CD8-positive, alpha-beta T cell (primary cell): ENCODE measurements at regions of chr4 and their contacts with region 1.

Region 1: DNA sequence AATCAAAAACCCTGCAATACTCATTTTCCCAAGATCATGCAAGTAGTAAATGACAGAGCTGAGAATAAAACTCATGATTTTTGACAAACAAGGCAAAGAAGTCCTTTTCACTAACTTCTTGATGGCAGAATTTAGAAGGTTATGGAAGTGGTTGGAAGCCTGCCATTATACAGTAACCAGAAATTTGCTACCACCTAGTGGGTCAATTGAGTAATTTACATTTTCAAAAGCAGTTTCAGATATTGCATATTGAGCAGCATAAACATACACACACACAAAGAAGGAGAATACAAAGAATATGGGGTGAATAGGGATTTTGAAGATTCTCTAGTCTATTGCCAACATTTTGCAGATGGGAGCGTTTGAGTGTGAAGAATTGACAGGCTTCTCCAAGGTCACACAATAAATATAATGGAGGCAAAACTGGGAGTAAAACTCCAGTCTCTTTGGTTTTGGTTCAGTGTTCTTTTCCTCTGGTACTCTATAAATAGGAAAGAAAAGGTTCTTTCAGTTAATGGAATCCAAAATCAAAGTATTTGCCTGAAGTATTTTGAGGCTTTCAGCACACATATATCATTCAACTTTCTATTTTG is 70.2 kb downstream of the GC start:
- DNase-seq: peak in 2 of 9 experiments; percentile 46 to 54
- ATAC-seq: no peak
- H3K4me3 ChIP-seq: no peak overlapping the region
- H3K4me3 Mint-ChIP-seq: no peak overlapping the region
- H3K27ac ChIP-seq: no peak overlapping the region
- H3K27ac Mint-ChIP-seq: no peak overlapping the region
- H3K4me1 ChIP-seq: no peaks in the 10 kb centered on the region
- H3K4me1 Mint-ChIP-seq: no peaks in the 10 kb centered on the region
- H3K27me3 ChIP-seq: no peaks in the 10 kb centered on the region
- H3K27me3 Mint-ChIP-seq: no peaks in the 10 kb centered on the region
- CTCF ChIP-seq: peak; percentile 52

Region 2: GRCh38 chr4:70601422-70602039 is 1112.2 kb before region 1 on chr4:
- CTCF ChIA-PET with region 1: interaction called, 4 read pairs
- POLR2A ChIA-PET with region 1: no interaction called
- intact Hi-C with region 1: loop called in 1 of 2 experiments (anchors 2 kb)
- DNase-seq: peak; percentile 34 to 79 (median 61)
- ATAC-seq: peak; percentile 77
- H3K4me3 ChIP-seq: no peak overlapping the region
- H3K4me3 Mint-ChIP-seq: no peak overlapping the region
- H3K27ac ChIP-seq: no peak overlapping the region
- H3K27ac Mint-ChIP-seq: no peak overlapping the region
- H3K4me1 ChIP-seq: peaks cover 6% of the 10 kb centered on the region
- H3K4me1 Mint-ChIP-seq: no peaks in the 10 kb centered on the region
- H3K27me3 ChIP-seq: no peaks in the 10 kb centered on the region
- H3K27me3 Mint-ChIP-seq: peaks cover 4% of the 10 kb centered on the region
- CTCF ChIP-seq: peak; percentile 90

Region 3: DNA sequence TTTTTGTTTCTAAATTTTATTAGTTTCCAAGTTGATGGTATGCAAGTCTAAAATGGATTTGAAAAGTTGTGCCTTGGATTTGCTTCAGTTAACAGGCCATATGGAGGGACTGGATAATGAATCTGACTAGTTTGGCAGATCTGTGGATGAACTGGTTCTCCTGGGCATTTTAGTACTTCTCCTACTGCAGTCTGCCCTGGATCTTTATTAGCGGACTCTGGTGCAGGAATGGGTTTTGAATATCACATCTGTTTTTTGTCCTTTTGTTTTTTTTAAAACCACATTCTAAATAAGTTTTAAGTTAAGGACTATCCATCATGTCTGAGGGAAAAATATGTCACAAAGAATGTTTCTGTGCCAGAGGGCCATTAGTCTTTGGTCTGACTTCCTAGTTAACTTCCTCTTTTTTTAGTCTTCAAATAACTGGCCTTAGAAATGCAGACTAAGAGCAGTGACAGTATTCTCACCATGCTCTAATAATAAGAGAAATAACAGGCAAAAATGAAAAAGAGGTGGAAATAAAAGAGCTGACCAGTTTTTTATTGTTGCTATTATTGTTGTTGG is 734.2 kb before region 1 on chr4:
- CTCF ChIA-PET with region 1: no interaction called
- POLR2A ChIA-PET with region 1: no interaction called
- intact Hi-C with region 1: loop called in 1 of 2 experiments (anchors 2 kb)
- DNase-seq: no peak
- ATAC-seq: no peak
- H3K4me3 ChIP-seq: no peak overlapping the region
- H3K4me3 Mint-ChIP-seq: no peak overlapping the region
- H3K27ac ChIP-seq: no peak overlapping the region
- H3K27ac Mint-ChIP-seq: no peak overlapping the region
- H3K4me1 ChIP-seq: no peaks in the 10 kb centered on the region
- H3K4me1 Mint-ChIP-seq: no peaks in the 10 kb centered on the region
- H3K27me3 ChIP-seq: no peaks in the 10 kb centered on the region
- H3K27me3 Mint-ChIP-seq: no peaks in the 10 kb centered on the region
- CTCF ChIP-seq: no peak

Region 4: GRCh38 chr4:71270901-71271300 is 442.8 kb before region 1 on chr4:
- CTCF ChIA-PET with region 1: interaction called, 3 read pairs
- POLR2A ChIA-PET with region 1: no interaction called
- intact Hi-C with region 1: loop called (anchors 2 to 5 kb)
- DNase-seq: peak in 6 of 9 experiments; percentile 21 to 65 (median 45)
- ATAC-seq: no peak
- H3K4me3 ChIP-seq: no peak overlapping the region
- H3K4me3 Mint-ChIP-seq: no peak overlapping the region
- H3K27ac ChIP-seq: no peak overlapping the region
- H3K27ac Mint-ChIP-seq: no peak overlapping the region
- H3K4me1 ChIP-seq: peaks cover 12% of the 10 kb centered on the region
- H3K4me1 Mint-ChIP-seq: peaks cover 18% of the 10 kb centered on the region
- H3K27me3 ChIP-seq: no peaks in the 10 kb centered on the region
- H3K27me3 Mint-ChIP-seq: no peaks in the 10 kb centered on the region
- CTCF ChIP-seq: peak; percentile 26